Natural killer cell (primary cell): ENCODE measurements at regions of chr11 and their contacts with region 1.

Region 1: GRCh38 chr11:35173011-35173511 is 34.1 kb downstream of the CD44 start:
- DNase-seq: no peak
- ATAC-seq: no peak
- H3K4me3 ChIP-seq: no peak overlapping the region
- H3K4me3 Mint-ChIP-seq: peak overlapping the region; percentile 80
- H3K27ac ChIP-seq: peak overlapping the region; percentile 67
- H3K27ac Mint-ChIP-seq: peak overlapping the region; percentile 66 to 74
- H3K4me1 ChIP-seq: peaks cover 56% of the 10 kb centered on the region
- H3K4me1 Mint-ChIP-seq: peaks cover 88 to 93% of the 10 kb centered on the region in 2 donors
- H3K27me3 ChIP-seq: no peaks in the 10 kb centered on the region
- H3K27me3 Mint-ChIP-seq: no peaks in the 10 kb centered on the region
- CTCF ChIP-seq: no peak

Region 2: DNA sequence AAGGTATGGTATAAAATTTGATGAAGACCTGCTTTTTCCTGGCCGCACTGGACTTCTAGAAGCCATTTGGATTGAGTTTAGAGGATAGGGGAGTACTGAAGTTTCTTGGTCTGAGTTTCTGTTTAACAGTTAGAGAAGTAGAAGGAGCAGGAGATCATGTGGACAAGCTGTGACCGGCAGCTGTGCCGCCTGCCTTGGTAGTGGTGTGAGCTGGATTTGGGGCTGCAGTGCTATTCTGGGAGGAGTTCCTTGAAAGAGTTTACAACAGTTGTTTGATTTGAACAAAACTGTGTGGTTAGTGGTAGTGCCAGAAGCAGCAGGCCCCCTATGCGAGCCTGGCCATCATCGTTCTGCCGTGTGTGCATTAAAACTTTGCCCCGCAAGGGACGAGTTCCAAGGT is 151.5 kb before region 1 on chr11:
- intact Hi-C with region 1: no loop called
- DNase-seq: no peak
- ATAC-seq: no peak
- H3K4me3 ChIP-seq: no peak overlapping the region
- H3K4me3 Mint-ChIP-seq: no peak overlapping the region
- H3K27ac ChIP-seq: no peak overlapping the region
- H3K27ac Mint-ChIP-seq: no peak overlapping the region
- H3K4me1 ChIP-seq: no peaks in the 10 kb centered on the region
- H3K4me1 Mint-ChIP-seq: peaks cover 0 to 4% of the 10 kb centered on the region in 2 donors
- H3K27me3 ChIP-seq: no peaks in the 10 kb centered on the region
- H3K27me3 Mint-ChIP-seq: no peaks in the 10 kb centered on the region
- CTCF ChIP-seq: no peak

Region 3: DNA sequence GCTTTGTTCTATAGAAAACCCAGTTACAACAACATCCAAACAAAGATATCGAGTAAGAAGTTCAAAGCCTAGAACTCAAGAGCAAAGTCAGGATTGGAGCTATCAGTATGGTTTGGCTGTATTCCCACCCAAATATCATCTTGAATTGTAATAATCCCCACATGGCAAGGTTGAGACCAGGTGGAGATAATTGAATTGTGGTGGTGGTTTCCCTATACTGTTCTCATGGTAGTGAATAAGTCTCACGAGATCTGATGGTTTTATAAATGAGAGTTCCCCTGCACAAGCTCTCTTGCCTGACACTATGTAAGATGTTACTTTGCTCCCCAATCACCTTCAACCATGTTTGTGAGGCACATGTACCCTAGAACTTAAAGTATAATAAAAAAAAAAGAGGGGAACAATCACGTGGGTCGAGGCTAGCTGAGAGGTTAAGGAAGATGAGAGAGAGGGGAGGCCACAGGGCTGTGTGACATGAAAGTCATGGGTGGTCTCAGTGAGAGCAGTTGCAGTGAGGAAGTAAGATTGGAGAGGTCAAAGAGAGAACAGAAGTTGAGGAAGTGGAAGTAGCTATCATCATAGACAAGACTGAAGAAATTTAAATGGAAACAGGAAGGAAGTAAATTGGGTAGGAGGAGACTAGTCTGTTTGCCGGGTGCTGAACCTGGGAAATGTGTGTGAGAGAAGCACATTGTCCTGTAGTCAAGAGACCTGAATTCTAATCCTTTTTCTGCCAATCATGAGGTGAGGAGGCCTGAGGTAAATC is 114.2 kb before region 1 on chr11:
- intact Hi-C with region 1: no loop called
- DNase-seq: peak in 1 of 2 donors; percentile 33
- ATAC-seq: peak; percentile 35 to 58 (median 47)
- H3K4me3 ChIP-seq: no peak overlapping the region
- H3K4me3 Mint-ChIP-seq: peak overlapping the region; percentile 0
- H3K27ac ChIP-seq: peak overlapping the region; percentile 28
- H3K27ac Mint-ChIP-seq: peak overlapping the region; percentile 61 to 81
- H3K4me1 ChIP-seq: peaks cover 14% of the 10 kb centered on the region
- H3K4me1 Mint-ChIP-seq: peaks cover 23 to 38% of the 10 kb centered on the region in 2 donors
- H3K27me3 ChIP-seq: no peaks in the 10 kb centered on the region
- H3K27me3 Mint-ChIP-seq: no peaks in the 10 kb centered on the region
- CTCF ChIP-seq: no peak

Region 4: GRCh38 chr11:35126000-35126878 is 46.8 kb before region 1 on chr11:
- intact Hi-C with region 1: loop called (anchors 10 kb)
- DNase-seq: peak in 1 of 2 donors; percentile 69
- ATAC-seq: peak; percentile 36 to 67 (median 39)
- H3K4me3 ChIP-seq: no peak overlapping the region
- H3K4me3 Mint-ChIP-seq: no peak overlapping the region
- H3K27ac ChIP-seq: no peak overlapping the region
- H3K27ac Mint-ChIP-seq: peak overlapping the region in 1 of 2 donors; percentile 14
- H3K4me1 ChIP-seq: peaks cover 12% of the 10 kb centered on the region
- H3K4me1 Mint-ChIP-seq: peaks cover 22 to 28% of the 10 kb centered on the region in 2 donors
- H3K27me3 ChIP-seq: no peaks in the 10 kb centered on the region
- H3K27me3 Mint-ChIP-seq: peaks cover 5 to 8% of the 10 kb centered on the region in 2 donors
- CTCF ChIP-seq: no peak

Region 5: GRCh38 chr11:35192347-35192746 is 19.3 kb after region 1 on chr11:
- intact Hi-C with region 1: no loop called
- DNase-seq: no peak
- ATAC-seq: peak in 1 of 3 donors; percentile 11
- H3K4me3 ChIP-seq: no peak overlapping the region
- H3K4me3 Mint-ChIP-seq: no peak overlapping the region
- H3K27ac ChIP-seq: no peak overlapping the region
- H3K27ac Mint-ChIP-seq: peak overlapping the region in 1 of 2 donors; percentile 30
- H3K4me1 ChIP-seq: peaks cover 4% of the 10 kb centered on the region
- H3K4me1 Mint-ChIP-seq: peaks cover 20 to 46% of the 10 kb centered on the region in 2 donors
- H3K27me3 ChIP-seq: no peaks in the 10 kb centered on the region
- H3K27me3 Mint-ChIP-seq: no peaks in the 10 kb centered on the region
- CTCF ChIP-seq: no peak

Region 6: GRCh38 chr11:35237860-35238715 is 65.0 kb after region 1 on chr11:
- intact Hi-C with region 1: loop called (anchors 5 kb)
- DNase-seq: peak in 1 of 2 donors; percentile 86
- ATAC-seq: peak in 2 of 3 donors; percentile 56 to 58
- H3K4me3 ChIP-seq: no peak overlapping the region
- H3K4me3 Mint-ChIP-seq: no peak overlapping the region
- H3K27ac ChIP-seq: no peak overlapping the region
- H3K27ac Mint-ChIP-seq: no peak overlapping the region
- H3K4me1 ChIP-seq: peaks cover 30% of the 10 kb centered on the region
- H3K4me1 Mint-ChIP-seq: peaks cover 45 to 47% of the 10 kb centered on the region in 2 donors
- H3K27me3 ChIP-seq: no peaks in the 10 kb centered on the region
- H3K27me3 Mint-ChIP-seq: peaks cover 3 to 13% of the 10 kb centered on the region in 2 donors
- CTCF ChIP-seq: peak; percentile 87

Region 7: DNA sequence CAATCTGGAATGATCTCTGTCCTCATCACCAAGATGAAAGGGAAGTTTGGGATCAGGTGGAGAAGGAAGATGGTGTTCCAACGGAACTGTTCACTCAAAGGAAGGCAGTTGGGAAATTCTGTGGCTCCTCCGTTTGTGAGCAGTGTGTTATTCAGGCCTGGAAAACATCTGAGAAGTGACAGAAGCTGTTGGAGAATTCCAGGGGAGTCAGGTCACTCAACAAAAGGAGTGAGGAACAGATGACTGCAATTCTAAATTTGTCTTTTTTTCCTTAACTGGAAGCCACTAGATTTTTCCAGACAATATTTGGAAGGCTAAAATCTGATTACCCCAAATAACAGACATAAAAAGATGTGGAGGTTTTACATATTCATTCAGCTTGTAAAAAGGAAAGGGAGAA is 73.7 kb after region 1 on chr11:
- intact Hi-C with region 1: loop called (anchors 2 kb)
- DNase-seq: no peak
- ATAC-seq: no peak
- H3K4me3 ChIP-seq: no peak overlapping the region
- H3K4me3 Mint-ChIP-seq: peak overlapping the region; percentile 62
- H3K27ac ChIP-seq: peak overlapping the region; percentile 80
- H3K27ac Mint-ChIP-seq: peak overlapping the region; percentile 81 to 93
- H3K4me1 ChIP-seq: peaks cover 40% of the 10 kb centered on the region
- H3K4me1 Mint-ChIP-seq: peaks cover 37% of the 10 kb centered on the region in 2 donors
- H3K27me3 ChIP-seq: no peaks in the 10 kb centered on the region
- H3K27me3 Mint-ChIP-seq: no peaks in the 10 kb centered on the region
- CTCF ChIP-seq: no peak

Region 8: GRCh38 chr11:35822815-35823495 is 649.9 kb after region 1 on chr11:
- intact Hi-C with region 1: no loop called
- DNase-seq: no peak
- ATAC-seq: no peak
- H3K4me3 ChIP-seq: no peak overlapping the region
- H3K4me3 Mint-ChIP-seq: no peak overlapping the region
- H3K27ac ChIP-seq: no peak overlapping the region
- H3K27ac Mint-ChIP-seq: no peak overlapping the region
- H3K4me1 ChIP-seq: peaks cover 9% of the 10 kb centered on the region
- H3K4me1 Mint-ChIP-seq: peaks cover 12 to 14% of the 10 kb centered on the region in 2 donors
- H3K27me3 ChIP-seq: no peaks in the 10 kb centered on the region
- H3K27me3 Mint-ChIP-seq: peaks cover 0 to 3% of the 10 kb centered on the region in 2 donors
- CTCF ChIP-seq: no peak